OCI-LY7 (cell line): ENCODE measurements at regions of chr21 and their contacts with region 1.

Region 1: DNA sequence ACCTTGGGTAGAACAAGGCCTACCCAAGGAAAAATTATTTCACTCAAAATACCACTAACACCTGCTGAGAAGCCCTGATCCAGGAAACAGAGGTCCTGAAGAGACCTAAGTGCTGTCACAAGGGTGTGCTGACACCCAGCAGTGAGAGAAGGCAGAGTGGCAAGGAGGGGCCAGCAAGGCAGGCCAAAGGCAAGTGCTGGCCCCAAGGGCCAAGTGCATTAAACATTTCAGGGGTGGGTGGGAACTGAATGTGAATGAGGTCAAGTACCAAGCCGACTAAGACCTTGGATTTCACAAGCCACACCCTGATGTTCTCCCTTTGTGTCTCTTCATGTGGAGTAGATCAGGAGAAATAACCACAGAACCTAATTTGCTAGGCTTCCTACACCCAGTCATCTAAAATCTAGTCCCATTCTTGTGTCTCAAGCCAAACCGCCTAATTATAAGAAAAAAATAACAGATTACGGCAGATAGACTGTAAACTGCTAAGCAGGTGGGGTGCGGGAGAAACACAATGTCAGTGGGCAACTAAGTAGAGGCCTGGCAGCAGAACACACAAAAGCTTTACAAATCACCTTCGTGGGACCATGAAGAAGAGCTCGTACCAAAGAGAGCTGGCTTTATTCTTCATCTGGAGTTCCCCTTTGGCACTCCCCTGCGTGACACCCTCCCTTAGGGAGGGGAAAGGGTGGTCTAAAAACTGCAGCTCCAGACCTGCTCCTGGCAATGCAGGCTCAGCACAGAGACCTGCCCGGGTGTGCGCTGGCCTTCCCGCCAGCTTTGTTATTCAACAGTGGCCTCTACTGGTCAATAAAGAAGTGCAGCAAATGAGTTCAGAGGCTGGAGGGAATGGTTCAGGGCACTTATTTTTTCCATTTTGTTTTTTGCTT is 8.7 kb downstream of the UBE2G2 start:
- DNase-seq: peak; percentile 52
- H3K4me3 ChIP-seq: no peak overlapping the region
- H3K27ac ChIP-seq: no peak overlapping the region
- H3K4me1 ChIP-seq: peaks cover 24% of the 10 kb centered on the region
- CTCF ChIP-seq: peak; percentile 85

Region 2: GRCh38 chr21:44510508-44511210 is 282.3 kb before region 1 on chr21:
- CTCF ChIA-PET with region 1: no interaction called
- POLR2A ChIA-PET with region 1: no interaction called
- intact Hi-C with region 1: loop called (anchors 1 kb)
- DNase-seq: peak; percentile 66
- H3K4me3 ChIP-seq: no peak overlapping the region
- H3K27ac ChIP-seq: no peak overlapping the region
- H3K4me1 ChIP-seq: no peaks in the 10 kb centered on the region
- CTCF ChIP-seq: peak; percentile 87